Head of caudate nucleus (tissue), 42 donors: ENCODE measurements at regions of chr16 and their contacts with region 1.

Region 1: GRCh38 chr16:50806099-50807062 is 64.5 kb downstream of the CYLD start:
- DNase-seq: peak; percentile 71 to 95 (median 90)

Region 2: GRCh38 chr16:50371936-50372595 is 434.3 kb before region 1 on chr16:
- intact Hi-C with region 1: loop called (anchors 10 kb)
- DNase-seq: peak; percentile 38 to 88 (median 74)

Region 3: DNA sequence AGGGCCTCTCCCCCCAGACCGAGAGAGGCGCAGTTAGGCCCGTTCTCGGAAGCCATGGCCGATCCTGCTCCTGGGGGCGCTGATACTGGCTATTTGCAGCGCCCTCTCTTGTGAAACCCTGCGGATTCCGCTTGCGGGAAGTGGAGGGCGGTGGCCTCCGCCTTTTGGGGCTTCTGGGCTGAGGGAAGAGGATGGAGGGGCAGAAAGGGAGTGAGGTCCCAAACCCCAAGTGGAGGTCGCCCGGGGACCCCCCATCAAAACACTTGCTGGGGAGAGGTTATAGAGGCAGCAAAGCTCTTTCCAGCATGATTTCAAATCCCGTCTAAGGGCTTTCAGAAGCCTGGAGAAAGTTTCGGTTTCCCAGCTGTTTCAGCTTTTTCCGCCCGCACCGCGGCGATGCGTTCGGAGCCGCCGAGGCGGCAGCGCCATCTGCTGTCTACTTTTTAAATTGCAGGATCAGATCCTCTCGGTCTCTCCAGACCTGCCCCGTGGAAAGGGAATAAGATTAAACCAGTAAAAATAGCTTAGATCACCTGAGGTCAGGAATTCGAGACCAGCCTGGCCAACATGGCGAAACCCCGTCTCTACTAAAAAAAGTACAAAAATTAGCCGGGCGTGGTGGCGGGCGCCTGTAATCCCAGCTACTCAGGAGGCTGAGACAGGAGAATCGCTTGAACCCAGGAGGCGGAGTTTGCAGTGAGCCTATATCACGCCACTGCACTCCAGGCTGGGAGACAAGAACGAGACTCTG is 141.1 kb before region 1 on chr16:
- intact Hi-C with region 1: loop called (anchors 5 kb)
- DNase-seq: peak; percentile 48 to 95 (median 87)

Region 4: DNA sequence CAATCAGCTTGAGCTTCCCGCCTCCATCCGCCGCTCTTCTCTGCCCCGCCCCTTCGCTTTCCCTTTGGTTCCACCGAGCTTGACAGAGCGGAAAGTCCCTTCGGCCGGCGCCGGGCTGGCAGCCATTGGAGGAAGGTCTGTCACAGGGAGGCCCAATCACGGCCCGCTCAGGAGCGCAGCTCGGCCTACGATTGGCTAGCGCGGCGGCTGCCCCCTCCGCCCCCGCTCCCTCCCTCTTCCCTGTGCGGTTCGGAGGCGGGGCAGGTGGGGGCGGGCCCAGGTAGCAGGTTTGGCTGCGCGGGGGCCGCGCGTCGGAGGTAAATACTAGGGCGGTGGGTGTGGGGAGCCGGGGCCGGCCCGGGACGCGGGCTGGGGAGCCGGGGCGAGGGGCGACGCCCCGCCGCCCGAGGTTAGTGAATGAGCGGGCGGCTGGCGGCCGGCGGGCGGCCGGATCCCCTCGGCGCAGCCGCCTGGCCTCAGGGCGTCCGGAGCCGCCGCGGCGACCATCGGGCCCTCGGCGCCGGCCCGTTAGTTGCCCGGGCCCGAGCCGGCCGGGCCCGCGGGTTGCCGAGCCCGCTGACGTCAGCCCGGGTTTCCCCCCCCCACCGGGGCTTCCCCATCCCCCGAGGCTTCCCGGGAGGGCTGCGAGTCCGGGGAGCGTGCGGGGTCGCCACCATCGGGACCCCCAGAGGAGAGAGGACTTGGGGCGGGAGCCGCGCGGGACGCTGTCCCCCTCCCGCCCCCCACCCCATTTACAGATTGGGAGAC is 64.4 kb before region 1 on chr16 and contains the start of gene CYLD:
- intact Hi-C with region 1: loop called (anchors 10 kb)
- DNase-seq: peak; percentile 99 to 100 (median 100)

Region 5: DNA sequence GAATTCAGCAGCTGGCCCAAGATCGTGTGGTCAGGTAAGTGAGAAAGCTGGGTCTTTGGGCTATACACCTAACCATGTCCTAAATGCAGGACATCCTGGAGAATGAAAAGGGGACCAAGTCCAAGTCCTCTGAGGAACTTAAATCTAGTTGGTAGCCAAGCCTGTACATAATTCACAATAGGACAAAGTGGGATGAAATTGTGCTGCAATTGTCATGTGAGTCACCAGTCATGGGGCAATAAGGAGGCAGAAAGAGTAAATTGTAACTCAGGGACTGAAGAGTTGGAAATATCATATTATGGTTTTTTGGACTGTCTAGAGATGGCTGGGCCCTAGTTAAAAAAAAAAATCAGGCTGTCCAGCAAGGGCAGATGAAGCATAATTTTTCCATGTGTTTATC is 138.1 kb after region 1 on chr16:
- intact Hi-C with region 1: no loop called
- DNase-seq: no peak